ENCODE measurements at regions of chr5 and their contacts with region 1.

Region 1: GRCh38 chr5:131634996-131635754 is at the start of gene RAPGEF6:
- DNase-seq: peak; percentile 89
- ATAC-seq: peak; percentile 87
- H3K4me3 Mint-ChIP-seq: peak within 1 kb of the TSS; percentile 90
- H3K27ac Mint-ChIP-seq: peak within 1 kb of the TSS; percentile 99
- H3K4me1 Mint-ChIP-seq: peaks cover 43% of the 10 kb centered on the region
- H3K27me3 Mint-ChIP-seq: no peaks in the 10 kb centered on the region
- CTCF ChIP-seq: no peak
- total RNA-seq, gene RAPGEF6: 37.2 and 45.1 TPM in 2 replicates

Region 2: GRCh38 chr5:130270786-130271185 is 1364.4 kb before region 1 on chr5:
- CTCF ChIA-PET with region 1: no interaction called
- POLR2A ChIA-PET with region 1: no interaction called
- intact Hi-C with region 1: no loop called
- DNase-seq: no peak
- ATAC-seq: no peak
- H3K4me3 Mint-ChIP-seq: no peak overlapping the region
- H3K27ac Mint-ChIP-seq: no peak overlapping the region
- H3K4me1 Mint-ChIP-seq: no peaks in the 10 kb centered on the region
- H3K27me3 Mint-ChIP-seq: peaks cover 2% of the 10 kb centered on the region
- CTCF ChIP-seq: no peak

Region 3: DNA sequence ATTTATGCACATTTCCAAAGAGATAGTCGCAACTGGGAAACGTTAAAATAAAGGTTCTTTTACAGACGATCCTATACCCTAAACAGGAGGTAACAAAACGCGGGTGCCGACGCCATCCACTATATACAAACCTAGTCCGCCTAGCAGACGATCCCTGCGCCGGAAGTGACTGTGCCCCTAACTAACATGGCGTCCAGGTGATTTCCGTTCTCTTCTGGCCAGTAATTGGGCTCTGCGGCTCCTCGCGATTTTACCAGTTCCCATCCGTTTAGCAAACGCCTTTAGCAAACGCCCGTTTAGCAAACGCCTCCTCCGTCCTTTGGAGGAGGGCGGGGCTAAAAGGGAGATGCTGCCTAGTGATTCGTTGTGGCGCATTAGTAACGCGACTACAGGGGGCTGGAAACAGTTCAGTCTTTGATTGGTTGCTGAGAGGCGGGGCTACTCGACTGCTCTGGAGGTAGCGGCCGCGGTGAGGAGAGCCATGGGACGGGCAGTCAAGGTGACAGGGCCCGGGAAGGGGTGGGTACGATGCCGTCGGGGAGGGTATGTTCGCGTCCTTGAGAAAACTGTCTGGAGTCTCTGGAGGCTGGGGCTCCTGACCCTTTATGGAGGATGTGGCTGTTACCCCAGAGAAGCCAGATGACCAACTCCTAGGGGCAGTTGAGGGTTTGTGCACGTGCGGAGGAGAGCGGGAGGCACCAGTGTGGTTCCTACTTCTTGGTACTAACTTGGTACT is 464.5 kb before region 1 on chr5 and contains the start of gene LYRM7:
- CTCF ChIA-PET with region 1: no interaction called
- POLR2A ChIA-PET with region 1: no interaction called
- intact Hi-C with region 1: loop called (anchors 2 kb)
- DNase-seq: peak; percentile 80
- ATAC-seq: peak; percentile 96
- H3K4me3 Mint-ChIP-seq: peak within 1 kb of the TSS; percentile 98
- H3K27ac Mint-ChIP-seq: peak within 1 kb of the TSS; percentile 93
- H3K4me1 Mint-ChIP-seq: peaks cover 42% of the 10 kb centered on the region
- H3K27me3 Mint-ChIP-seq: no peaks in the 10 kb centered on the region
- CTCF ChIP-seq: no peak
- total RNA-seq, gene LYRM7: 11.9 and 13.1 TPM in 2 replicates

Region 4: GRCh38 chr5:131496400-131497007 is 138.7 kb before region 1 on chr5:
- CTCF ChIA-PET with region 1: no interaction called
- POLR2A ChIA-PET with region 1: no interaction called
- intact Hi-C with region 1: loop called (anchors 2 kb)
- DNase-seq: no peak
- ATAC-seq: peak; percentile 94
- H3K4me3 Mint-ChIP-seq: no peak overlapping the region
- H3K27ac Mint-ChIP-seq: peak overlapping the region; percentile 59
- H3K4me1 Mint-ChIP-seq: peaks cover 20% of the 10 kb centered on the region
- H3K27me3 Mint-ChIP-seq: no peaks in the 10 kb centered on the region
- CTCF ChIP-seq: no peak

Region 5: GRCh38 chr5:131589510-131590348 is 45.4 kb before region 1 on chr5:
- CTCF ChIA-PET with region 1: interaction called, 7 read pairs
- POLR2A ChIA-PET with region 1: no interaction called
- intact Hi-C with region 1: loop called (anchors 2 kb)
- DNase-seq: no peak
- ATAC-seq: peak; percentile 57
- H3K4me3 Mint-ChIP-seq: no peak overlapping the region
- H3K27ac Mint-ChIP-seq: no peak overlapping the region
- H3K4me1 Mint-ChIP-seq: peaks cover 25% of the 10 kb centered on the region
- H3K27me3 Mint-ChIP-seq: no peaks in the 10 kb centered on the region
- CTCF ChIP-seq: peak; percentile 48

Region 6: DNA sequence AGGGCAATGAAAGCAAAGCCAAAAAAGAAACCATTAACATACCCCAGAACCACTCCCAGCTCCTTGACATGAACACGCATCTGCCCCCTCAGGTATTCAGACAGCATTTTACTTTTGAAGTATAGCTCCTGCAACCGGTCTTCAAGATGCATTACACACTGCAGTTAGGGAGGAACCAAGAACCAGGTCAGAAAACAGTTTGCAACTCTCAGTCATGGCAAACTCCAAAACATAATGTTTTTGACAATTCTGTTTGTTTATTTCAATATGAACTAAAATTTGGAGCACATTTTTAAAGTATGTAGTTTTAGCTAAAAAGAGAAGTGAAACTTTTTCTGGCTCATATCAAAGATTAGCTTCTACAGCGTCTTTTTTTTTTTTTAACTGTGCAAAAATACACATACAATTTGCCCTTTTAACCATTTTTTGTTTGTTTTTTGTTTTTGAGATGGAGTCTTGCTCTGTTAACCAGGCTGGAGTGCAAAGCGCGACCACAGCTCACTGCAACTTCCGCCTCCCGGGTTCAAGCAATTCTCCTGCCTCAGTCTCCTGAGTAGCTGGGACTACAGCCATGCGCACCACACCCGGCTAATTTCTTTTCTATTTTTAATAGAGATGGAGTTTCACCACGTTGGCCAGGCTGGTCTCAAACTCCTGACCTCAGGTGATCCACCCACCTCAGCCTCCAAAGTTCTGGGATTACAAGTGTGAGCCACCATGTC is 12.0 kb after region 1 on chr5:
- CTCF ChIA-PET with region 1: interaction called, 11 read pairs
- POLR2A ChIA-PET with region 1: interaction called, 46 read pairs
- intact Hi-C with region 1: loop called (anchors 1 kb)
- DNase-seq: no peak
- ATAC-seq: peak; percentile 92
- H3K4me3 Mint-ChIP-seq: peak overlapping the region; percentile 76
- H3K27ac Mint-ChIP-seq: peak overlapping the region; percentile 90
- H3K4me1 Mint-ChIP-seq: peaks cover 37% of the 10 kb centered on the region
- H3K27me3 Mint-ChIP-seq: no peaks in the 10 kb centered on the region
- CTCF ChIP-seq: no peak

Region 7: DNA sequence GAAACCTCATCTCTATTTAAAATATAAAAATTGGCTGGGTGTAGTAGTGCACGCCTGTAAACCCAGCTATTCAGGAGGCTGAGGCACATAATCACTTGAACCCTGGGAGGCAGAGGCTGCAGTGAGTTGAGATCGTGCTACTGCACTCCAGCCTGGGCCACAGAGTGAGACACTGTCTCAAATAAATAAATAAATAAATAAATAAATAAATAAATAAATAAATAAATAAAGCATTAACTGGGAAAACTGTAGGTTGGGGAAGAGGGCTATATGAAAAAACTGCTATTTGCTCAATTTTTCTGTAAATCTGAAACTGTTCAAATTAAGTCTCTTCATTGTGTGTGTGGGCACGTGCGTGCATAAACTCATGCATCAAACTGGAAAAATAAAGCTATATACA is 59.8 kb after region 1 on chr5:
- CTCF ChIA-PET with region 1: no interaction called
- POLR2A ChIA-PET with region 1: no interaction called
- intact Hi-C with region 1: loop called (anchors 5 kb)
- DNase-seq: no peak
- ATAC-seq: no peak
- H3K4me3 Mint-ChIP-seq: no peak overlapping the region
- H3K27ac Mint-ChIP-seq: no peak overlapping the region
- H3K4me1 Mint-ChIP-seq: no peaks in the 10 kb centered on the region
- H3K27me3 Mint-ChIP-seq: no peaks in the 10 kb centered on the region
- CTCF ChIP-seq: no peak

Region 8: GRCh38 chr5:131944702-131945550 is 309.8 kb after region 1 on chr5:
- CTCF ChIA-PET with region 1: no interaction called
- POLR2A ChIA-PET with region 1: no interaction called
- intact Hi-C with region 1: no loop called
- DNase-seq: no peak
- ATAC-seq: peak; percentile 40
- H3K4me3 Mint-ChIP-seq: no peak overlapping the region
- H3K27ac Mint-ChIP-seq: no peak overlapping the region
- H3K4me1 Mint-ChIP-seq: peaks cover 9% of the 10 kb centered on the region
- H3K27me3 Mint-ChIP-seq: peaks cover 15% of the 10 kb centered on the region
- CTCF ChIP-seq: no peak

Region 9: DNA sequence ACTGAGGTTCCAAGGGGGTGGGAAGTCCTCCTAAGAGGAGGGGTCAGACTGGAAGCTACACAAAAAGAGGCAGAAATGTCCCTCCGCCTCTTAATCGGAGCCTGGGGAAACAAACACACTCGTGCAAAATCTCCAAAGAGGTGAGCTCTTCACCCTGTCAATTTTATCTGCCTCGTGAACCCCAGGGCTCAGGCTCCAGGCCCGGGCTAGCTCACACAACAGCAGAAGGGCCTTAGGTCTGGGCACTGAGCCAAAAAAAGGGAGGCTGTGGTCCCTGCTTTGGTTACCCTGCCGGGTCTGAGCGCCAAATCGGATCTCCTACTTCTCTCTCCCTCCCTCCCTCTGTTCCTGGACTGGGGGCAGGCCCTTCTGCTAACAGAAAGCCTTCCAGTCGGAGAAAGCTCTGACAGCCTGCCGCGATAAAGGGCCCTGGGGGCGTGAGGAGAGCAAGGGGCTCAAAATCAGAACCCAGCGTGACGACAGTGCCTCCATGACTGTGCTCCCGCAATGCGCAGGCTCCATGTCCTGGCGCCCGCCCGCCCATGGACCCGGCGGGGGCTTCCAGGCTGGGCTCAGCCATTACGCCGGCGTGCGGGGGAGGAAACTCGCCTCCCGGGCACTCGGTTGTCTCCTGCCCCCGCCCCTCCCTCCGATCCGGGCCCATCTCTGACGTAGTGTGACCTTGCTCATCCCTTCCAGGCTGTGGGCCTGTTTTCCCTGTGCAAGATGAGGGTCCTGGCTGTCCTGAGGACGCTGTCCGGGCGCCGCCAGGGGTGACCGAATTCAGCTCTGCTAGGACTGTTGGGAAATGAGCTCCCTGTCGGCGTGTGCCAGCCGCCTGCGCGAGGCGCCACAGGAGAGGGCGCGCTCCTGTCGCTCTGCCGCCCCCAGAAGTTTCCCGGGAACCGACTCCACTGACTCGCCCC is 658.2 kb after region 1 on chr5:
- CTCF ChIA-PET with region 1: no interaction called
- POLR2A ChIA-PET with region 1: no interaction called
- intact Hi-C with region 1: loop called (anchors 5 kb)
- DNase-seq: peak; percentile 56
- ATAC-seq: peak; percentile 43
- H3K4me3 Mint-ChIP-seq: peak overlapping the region; percentile 87
- H3K27ac Mint-ChIP-seq: peak overlapping the region; percentile 76
- H3K4me1 Mint-ChIP-seq: peaks cover 15% of the 10 kb centered on the region
- H3K27me3 Mint-ChIP-seq: peaks cover 34% of the 10 kb centered on the region
- CTCF ChIP-seq: no peak

Measured in activated B cell treated with CpG ODN at 0.5 μM for 24 hours (primary cell).